CD8-positive, alpha-beta T cell (primary cell): ENCODE measurements at regions of chr6 and their contacts with region 1.

Region 1: GRCh38 chr6:149834513-149835481 is 29.4 kb downstream of the LRP11 start:
- DNase-seq: peak; percentile 58 to 82 (median 76)
- ATAC-seq: peak; percentile 98
- H3K4me3 ChIP-seq: no peak overlapping the region
- H3K4me3 Mint-ChIP-seq: no peak overlapping the region
- H3K27ac ChIP-seq: no peak overlapping the region
- H3K27ac Mint-ChIP-seq: no peak overlapping the region
- H3K4me1 ChIP-seq: no peaks in the 10 kb centered on the region
- H3K4me1 Mint-ChIP-seq: peaks cover 2% of the 10 kb centered on the region
- H3K27me3 ChIP-seq: no peaks in the 10 kb centered on the region
- H3K27me3 Mint-ChIP-seq: peaks cover 4% of the 10 kb centered on the region
- CTCF ChIP-seq: peak; percentile 86

Region 2: GRCh38 chr6:149468179-149468578 is 366.6 kb before region 1 on chr6:
- CTCF ChIA-PET with region 1: no interaction called
- POLR2A ChIA-PET with region 1: no interaction called
- intact Hi-C with region 1: no loop called
- DNase-seq: no peak
- ATAC-seq: no peak
- H3K4me3 ChIP-seq: no peak overlapping the region
- H3K4me3 Mint-ChIP-seq: no peak overlapping the region
- H3K27ac ChIP-seq: no peak overlapping the region
- H3K27ac Mint-ChIP-seq: peak overlapping the region; percentile 30
- H3K4me1 ChIP-seq: peaks cover 26% of the 10 kb centered on the region
- H3K4me1 Mint-ChIP-seq: peaks cover 29% of the 10 kb centered on the region
- H3K27me3 ChIP-seq: no peaks in the 10 kb centered on the region
- H3K27me3 Mint-ChIP-seq: no peaks in the 10 kb centered on the region
- CTCF ChIP-seq: no peak

Region 3: DNA sequence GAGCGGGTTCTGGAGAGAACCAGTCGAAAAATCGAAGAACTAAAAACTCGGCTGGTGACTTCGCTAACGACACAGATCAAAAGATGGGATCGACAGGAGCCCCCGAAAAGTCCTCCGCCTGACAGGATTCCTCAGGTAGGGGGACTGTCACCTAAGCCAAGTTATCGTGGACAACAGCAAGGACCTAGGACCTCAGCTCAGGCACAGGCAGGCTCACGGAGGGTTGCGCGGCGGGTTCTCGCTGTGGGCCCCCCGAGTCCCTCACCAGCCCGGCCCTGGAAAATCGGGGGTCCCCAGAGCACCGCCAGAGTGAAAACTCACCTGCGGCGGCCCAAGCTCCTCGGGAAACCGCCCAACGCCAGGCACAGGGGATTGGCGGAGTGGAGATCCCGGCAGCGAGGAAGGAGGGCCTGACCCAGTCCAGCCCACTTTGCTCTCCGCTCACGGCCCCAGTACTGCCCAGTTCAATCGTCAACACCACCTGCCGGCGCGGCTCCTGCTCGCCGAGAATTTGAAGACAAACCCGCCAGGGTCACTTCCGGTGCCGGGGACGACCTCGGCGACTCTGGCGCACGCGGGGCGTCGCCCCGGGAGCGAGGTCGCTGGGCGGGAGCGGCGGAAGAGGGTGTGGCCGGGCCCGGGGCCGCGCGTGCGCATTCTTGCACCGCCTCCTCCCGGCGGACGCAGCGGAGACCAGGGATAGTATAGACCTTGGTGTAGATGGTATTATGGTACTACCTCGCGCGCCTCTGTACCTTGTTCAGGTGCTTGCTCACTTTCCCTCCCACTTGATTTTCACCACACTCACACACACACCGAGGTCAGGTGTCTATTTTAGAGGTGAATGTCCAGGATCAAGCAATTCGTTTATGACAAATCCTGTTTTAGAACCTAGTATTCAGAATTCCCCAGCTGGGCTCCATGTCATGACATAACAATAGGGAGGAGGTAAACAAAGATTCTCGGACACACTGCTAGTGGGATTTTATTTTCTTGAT is 186.3 kb before region 1 on chr6 and contains the start of gene KATNA1:
- CTCF ChIA-PET with region 1: no interaction called
- POLR2A ChIA-PET with region 1: no interaction called
- intact Hi-C with region 1: no loop called
- DNase-seq: peak; percentile 65 to 91 (median 84)
- ATAC-seq: peak; percentile 91
- H3K4me3 ChIP-seq: peak within 1 kb of the TSS; percentile 78 to 97
- H3K4me3 Mint-ChIP-seq: peak within 1 kb of the TSS; percentile 90
- H3K27ac ChIP-seq: peak within 1 kb of the TSS; percentile 77 to 90
- H3K27ac Mint-ChIP-seq: peak within 1 kb of the TSS; percentile 63
- H3K4me1 ChIP-seq: peaks cover 30% of the 10 kb centered on the region
- H3K4me1 Mint-ChIP-seq: peaks cover 37% of the 10 kb centered on the region
- H3K27me3 ChIP-seq: no peaks in the 10 kb centered on the region
- H3K27me3 Mint-ChIP-seq: no peaks in the 10 kb centered on the region
- CTCF ChIP-seq: no peak
- total RNA-seq, gene KATNA1: 18.0 to 20.8 TPM

Region 4: GRCh38 chr6:149723771-149724417 is 110.9 kb before region 1 on chr6:
- CTCF ChIA-PET with region 1: no interaction called
- POLR2A ChIA-PET with region 1: no interaction called
- intact Hi-C with region 1: loop called in 1 of 2 experiments (anchors 1 kb)
- DNase-seq: peak in 8 of 9 experiments; percentile 27 to 69 (median 44)
- ATAC-seq: peak; percentile 94
- H3K4me3 ChIP-seq: no peak overlapping the region
- H3K4me3 Mint-ChIP-seq: no peak overlapping the region
- H3K27ac ChIP-seq: no peak overlapping the region
- H3K27ac Mint-ChIP-seq: no peak overlapping the region
- H3K4me1 ChIP-seq: peaks cover 13% of the 10 kb centered on the region
- H3K4me1 Mint-ChIP-seq: peaks cover 18% of the 10 kb centered on the region
- H3K27me3 ChIP-seq: no peaks in the 10 kb centered on the region
- H3K27me3 Mint-ChIP-seq: no peaks in the 10 kb centered on the region
- CTCF ChIP-seq: peak; percentile 69

Region 5: DNA sequence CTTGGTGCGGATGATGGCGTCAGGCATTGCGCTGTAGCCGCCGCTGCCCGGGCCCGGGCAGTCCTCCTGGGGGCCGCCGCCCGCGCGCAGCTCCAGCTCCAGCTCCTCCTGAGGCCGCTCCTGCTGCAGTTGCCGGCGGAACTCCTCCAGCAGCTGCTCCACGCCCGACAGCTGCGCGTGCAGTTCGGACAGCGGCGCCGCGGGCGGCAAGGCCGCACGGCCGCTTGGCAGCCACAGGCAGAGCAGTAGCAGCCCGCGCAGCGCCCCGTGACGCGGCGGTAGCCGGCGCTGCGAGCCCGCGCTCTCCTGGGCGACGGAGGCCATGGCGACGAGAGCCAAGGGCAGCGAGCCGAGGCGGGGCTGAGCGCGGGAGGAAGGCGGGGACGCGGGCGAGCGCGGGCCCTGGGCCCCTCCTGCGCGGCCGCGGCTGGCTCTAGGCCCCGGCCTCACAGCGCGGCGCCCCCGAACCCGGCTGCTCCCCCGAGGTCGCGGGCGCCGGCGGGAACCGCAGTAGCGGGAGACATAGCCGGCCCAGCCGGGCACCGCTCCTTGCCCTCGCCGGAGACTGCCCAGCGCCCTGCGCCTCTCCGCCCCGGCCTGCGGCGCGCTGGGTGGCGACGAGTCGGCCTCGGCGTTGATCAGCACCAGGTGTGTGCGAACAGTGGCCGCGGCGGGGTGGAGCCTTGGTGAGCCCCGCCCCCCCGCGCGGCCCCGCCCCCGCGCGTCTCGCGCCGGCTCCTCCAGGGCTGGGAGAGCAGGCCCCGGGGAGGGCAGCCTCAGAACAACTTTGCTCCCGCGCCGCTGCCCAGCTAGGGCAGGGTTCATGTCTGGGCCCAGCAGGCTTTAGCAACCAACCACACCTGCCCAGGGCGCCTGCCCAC is 29.1 kb after region 1 on chr6 and contains the start of gene LRP11:
- CTCF ChIA-PET with region 1: interaction called, 8 read pairs
- POLR2A ChIA-PET with region 1: no interaction called
- intact Hi-C with region 1: loop called (anchors 1 to 2 kb)
- DNase-seq: peak; percentile 65 to 87 (median 77)
- ATAC-seq: peak; percentile 90
- H3K4me3 ChIP-seq: peak within 1 kb of the TSS; percentile 38 to 60
- H3K4me3 Mint-ChIP-seq: peak within 1 kb of the TSS; percentile 85
- H3K27ac ChIP-seq: peak within 1 kb of the TSS in 1 of 2 experiments; percentile 18
- H3K27ac Mint-ChIP-seq: no peak within 1 kb of the TSS
- H3K4me1 ChIP-seq: peaks cover 7% of the 10 kb centered on the region
- H3K4me1 Mint-ChIP-seq: peaks cover 11% of the 10 kb centered on the region
- H3K27me3 ChIP-seq: peaks cover 3 to 4% of the 10 kb centered on the region in 2 experiments
- H3K27me3 Mint-ChIP-seq: peaks cover 34% of the 10 kb centered on the region
- CTCF ChIP-seq: no peak
- total RNA-seq, gene LRP11: 0.17 TPM in 1 of 2 experiments, not detected in the other

Region 6: DNA sequence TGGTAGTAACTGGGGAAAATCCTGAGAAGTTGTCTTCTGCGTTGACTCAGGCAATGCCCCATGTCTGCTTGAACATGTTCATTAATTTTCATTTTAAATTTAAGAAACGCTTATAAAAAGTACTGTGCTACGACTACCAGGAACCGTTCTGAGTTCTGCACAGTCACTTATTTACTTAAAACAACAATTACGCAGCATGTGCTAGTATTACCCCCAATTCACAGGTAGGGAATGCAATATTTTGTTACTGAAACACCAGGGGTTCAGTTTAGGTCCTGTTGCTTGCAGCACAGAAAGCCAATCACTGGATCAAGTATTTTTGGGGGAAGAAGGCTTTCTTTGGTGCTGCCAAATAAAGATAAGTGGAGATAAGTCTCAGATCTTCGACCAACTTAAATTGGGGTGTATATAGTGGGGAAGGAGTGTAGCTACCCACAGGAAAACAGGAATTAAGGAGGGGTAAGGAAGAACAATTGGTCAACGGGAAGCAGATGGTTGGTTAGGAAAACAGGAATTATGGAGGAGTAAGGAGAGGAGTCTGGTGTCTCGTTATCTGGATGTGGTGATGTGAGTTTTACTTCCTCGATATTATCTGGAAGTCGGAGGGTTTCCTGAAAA is 34.6 kb after region 1 on chr6:
- CTCF ChIA-PET with region 1: interaction called, 11 read pairs
- POLR2A ChIA-PET with region 1: no interaction called
- intact Hi-C with region 1: loop called (anchors 1 to 2 kb)
- DNase-seq: no peak
- ATAC-seq: no peak
- H3K4me3 ChIP-seq: no peak overlapping the region
- H3K4me3 Mint-ChIP-seq: no peak overlapping the region
- H3K27ac ChIP-seq: no peak overlapping the region
- H3K27ac Mint-ChIP-seq: no peak overlapping the region
- H3K4me1 ChIP-seq: peaks cover 5% of the 10 kb centered on the region
- H3K4me1 Mint-ChIP-seq: peaks cover 5% of the 10 kb centered on the region
- H3K27me3 ChIP-seq: peaks cover 0 to 3% of the 10 kb centered on the region in 2 experiments
- H3K27me3 Mint-ChIP-seq: peaks cover 13% of the 10 kb centered on the region
- CTCF ChIP-seq: no peak

Region 7: DNA sequence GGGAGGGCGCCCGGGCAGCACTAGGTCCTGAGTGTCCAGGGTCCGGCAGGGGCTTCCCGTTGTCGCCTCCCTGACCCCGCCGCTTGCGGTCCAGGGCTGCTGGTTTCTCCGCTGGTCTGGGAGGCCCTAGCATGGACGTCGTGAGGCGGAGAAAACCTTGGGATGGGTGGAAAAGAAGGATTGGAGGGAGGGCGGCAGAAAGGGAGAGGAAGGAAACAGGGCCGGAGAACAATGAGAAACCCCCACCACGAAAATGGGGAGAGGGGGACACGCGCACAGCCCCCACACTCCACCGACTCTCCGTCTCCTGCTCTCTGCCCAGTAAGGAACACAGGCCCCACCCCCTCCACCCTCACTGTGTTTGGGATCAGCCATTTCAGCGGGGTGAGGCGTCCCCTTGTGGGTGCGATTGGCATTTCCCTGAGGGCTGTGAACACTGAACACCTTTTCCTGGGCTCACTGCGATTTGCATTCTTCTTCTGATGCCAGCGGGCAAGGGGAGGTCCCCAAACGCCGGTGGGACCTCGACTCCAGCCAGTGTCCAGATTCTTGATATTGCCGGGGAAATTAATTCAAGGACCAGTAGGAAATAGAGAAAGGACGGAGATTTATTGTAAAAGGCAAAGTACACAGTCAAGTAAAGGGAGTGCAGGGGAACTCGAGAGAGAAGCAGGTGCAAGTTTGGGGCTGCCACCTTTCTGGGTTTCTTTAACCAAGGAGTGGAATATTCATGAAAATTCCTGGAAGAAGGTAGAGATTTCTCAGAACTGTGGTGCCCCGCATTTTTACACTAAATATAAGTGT is 91.4 kb after region 1 on chr6:
- CTCF ChIA-PET with region 1: interaction called, 4 read pairs
- POLR2A ChIA-PET with region 1: no interaction called
- intact Hi-C with region 1: loop called (anchors 1 kb)
- DNase-seq: peak; percentile 46 to 79 (median 72)
- ATAC-seq: peak; percentile 57
- H3K4me3 ChIP-seq: peak overlapping the region in 1 of 2 experiments; percentile 38
- H3K4me3 Mint-ChIP-seq: no peak overlapping the region
- H3K27ac ChIP-seq: no peak overlapping the region
- H3K27ac Mint-ChIP-seq: no peak overlapping the region
- H3K4me1 ChIP-seq: peaks cover 17% of the 10 kb centered on the region
- H3K4me1 Mint-ChIP-seq: peaks cover 34% of the 10 kb centered on the region
- H3K27me3 ChIP-seq: peaks cover 31 to 50% of the 10 kb centered on the region in 2 experiments
- H3K27me3 Mint-ChIP-seq: peaks cover 81% of the 10 kb centered on the region
- CTCF ChIP-seq: peak; percentile 78

Region 8: GRCh38 chr6:149950423-149950822 is 115.6 kb after region 1 on chr6:
- CTCF ChIA-PET with region 1: no interaction called
- POLR2A ChIA-PET with region 1: no interaction called
- intact Hi-C with region 1: no loop called
- DNase-seq: no peak
- ATAC-seq: no peak
- H3K4me3 ChIP-seq: no peak overlapping the region
- H3K4me3 Mint-ChIP-seq: no peak overlapping the region
- H3K27ac ChIP-seq: no peak overlapping the region
- H3K27ac Mint-ChIP-seq: no peak overlapping the region
- H3K4me1 ChIP-seq: no peaks in the 10 kb centered on the region
- H3K4me1 Mint-ChIP-seq: peaks cover 6% of the 10 kb centered on the region
- H3K27me3 ChIP-seq: peaks cover 10 to 11% of the 10 kb centered on the region in 2 experiments
- H3K27me3 Mint-ChIP-seq: peaks cover 53% of the 10 kb centered on the region
- CTCF ChIP-seq: no peak

Region 9: GRCh38 chr6:150016324-150017185 is 181.8 kb after region 1 on chr6:
- CTCF ChIA-PET with region 1: interaction called, 7 read pairs
- POLR2A ChIA-PET with region 1: no interaction called
- intact Hi-C with region 1: loop called (anchors 1 to 2 kb)
- DNase-seq: peak; percentile 18 to 83 (median 55)
- ATAC-seq: peak; percentile 88
- H3K4me3 ChIP-seq: no peak overlapping the region
- H3K4me3 Mint-ChIP-seq: no peak overlapping the region
- H3K27ac ChIP-seq: no peak overlapping the region
- H3K27ac Mint-ChIP-seq: no peak overlapping the region
- H3K4me1 ChIP-seq: peaks cover 5% of the 10 kb centered on the region
- H3K4me1 Mint-ChIP-seq: peaks cover 9% of the 10 kb centered on the region
- H3K27me3 ChIP-seq: peaks cover 13 to 28% of the 10 kb centered on the region in 2 experiments
- H3K27me3 Mint-ChIP-seq: peaks cover 64% of the 10 kb centered on the region
- CTCF ChIP-seq: peak; percentile 70

Region 10: DNA sequence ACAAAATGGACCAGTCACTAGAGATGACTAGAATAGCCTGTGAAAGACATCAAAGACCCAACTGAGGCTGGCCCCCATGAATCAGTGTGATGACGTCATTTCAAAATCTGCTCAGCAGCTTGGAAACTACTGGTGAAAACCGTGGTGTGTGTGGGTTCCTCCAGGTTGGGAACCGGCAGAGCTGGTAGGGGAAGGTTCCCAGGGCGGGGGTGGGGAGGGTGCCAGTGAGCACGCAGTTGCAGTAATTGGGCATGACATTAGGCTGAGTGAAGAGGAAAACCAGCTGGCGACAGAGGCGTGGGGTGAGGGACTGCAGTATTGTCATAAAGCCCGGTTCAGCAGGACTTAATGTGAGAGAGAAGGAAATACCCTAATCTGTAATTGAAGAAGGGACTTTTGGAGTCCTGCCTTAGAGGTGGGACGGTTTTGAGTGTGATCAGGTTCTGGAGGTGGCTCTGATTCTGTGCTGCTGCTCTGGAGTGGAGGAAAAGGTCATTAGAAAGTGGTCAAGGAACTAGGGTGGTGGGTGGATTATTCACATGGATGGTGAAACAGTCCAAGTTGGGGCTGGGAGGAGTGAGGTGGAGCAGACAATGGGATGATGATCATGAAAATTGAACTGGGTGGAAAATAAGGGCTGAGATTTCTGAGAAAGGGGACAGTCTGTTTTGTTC is 978.7 kb after region 1 on chr6:
- CTCF ChIA-PET with region 1: no interaction called
- POLR2A ChIA-PET with region 1: no interaction called
- intact Hi-C with region 1: loop called in 1 of 2 experiments (anchors 5 kb)
- DNase-seq: peak in 4 of 9 experiments; percentile 8 to 64 (median 38)
- ATAC-seq: peak; percentile 46
- H3K4me3 ChIP-seq: no peak overlapping the region
- H3K4me3 Mint-ChIP-seq: no peak overlapping the region
- H3K27ac ChIP-seq: peak overlapping the region in 1 of 2 experiments; percentile 19
- H3K27ac Mint-ChIP-seq: no peak overlapping the region
- H3K4me1 ChIP-seq: no peaks in the 10 kb centered on the region
- H3K4me1 Mint-ChIP-seq: peaks cover 4% of the 10 kb centered on the region
- H3K27me3 ChIP-seq: no peaks in the 10 kb centered on the region
- H3K27me3 Mint-ChIP-seq: peaks cover 7% of the 10 kb centered on the region
- CTCF ChIP-seq: no peak